Mammary epithelial cell (primary cell): ENCODE measurements at regions of chr20 and their contacts with region 1.

Region 1: GRCh38 chr20:40506567-40506966 is 182.5 kb downstream of the MAFB start:
- DNase-seq: peak; percentile 99
- H3K4me3 ChIP-seq: no peak overlapping the region
- H3K27ac ChIP-seq: peak overlapping the region; percentile 45
- H3K4me1 ChIP-seq: peaks cover 22% of the 10 kb centered on the region
- H3K27me3 ChIP-seq: no peaks in the 10 kb centered on the region
- CTCF ChIP-seq: peak in 1 of 2 donors; percentile 36

Region 2: DNA sequence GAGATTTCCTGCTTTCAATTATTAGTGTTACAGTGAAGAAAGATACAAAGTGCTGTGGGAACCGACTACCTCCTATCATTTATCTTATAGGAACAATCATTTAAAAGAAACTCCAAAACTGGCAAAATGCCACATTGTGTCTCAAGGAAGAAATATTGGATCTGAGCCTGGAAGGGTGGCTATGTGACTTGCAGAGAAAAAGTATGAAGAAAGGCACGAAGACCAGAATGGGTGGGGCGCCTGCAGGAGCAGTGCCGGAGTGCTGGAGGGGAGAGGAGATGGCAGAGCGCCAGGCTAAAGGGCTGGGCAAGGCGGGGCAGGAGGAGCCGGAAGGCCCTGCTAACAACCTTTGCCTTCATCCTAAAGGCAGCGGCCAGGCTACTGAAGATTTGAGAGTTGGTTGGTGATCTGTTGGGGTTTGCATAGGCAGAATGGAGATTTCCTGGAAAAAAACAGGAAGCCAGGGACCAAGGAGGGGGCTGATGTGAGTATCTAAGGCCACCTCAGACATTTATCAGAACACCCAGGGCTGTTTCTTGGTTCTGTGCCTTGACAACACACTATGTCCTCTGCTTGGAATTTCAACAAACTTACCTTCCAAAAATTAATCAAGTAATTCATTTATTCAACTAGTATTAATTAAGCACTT is 56.9 kb after region 1 on chr20:
- CTCF ChIA-PET with region 1: no interaction called
- dilution Hi-C with region 1: no loop called
- in situ Hi-C with region 1: no loop called
- intact Hi-C with region 1: loop called (anchors 5 kb)
- DNase-seq: peak; percentile 73
- H3K4me3 ChIP-seq: no peak overlapping the region
- H3K27ac ChIP-seq: no peak overlapping the region
- H3K4me1 ChIP-seq: peaks cover 39% of the 10 kb centered on the region
- H3K27me3 ChIP-seq: no peaks in the 10 kb centered on the region
- CTCF ChIP-seq: no peak